ENCODE measurements at regions of chr19 and their contacts with region 1.

Region 1: DNA sequence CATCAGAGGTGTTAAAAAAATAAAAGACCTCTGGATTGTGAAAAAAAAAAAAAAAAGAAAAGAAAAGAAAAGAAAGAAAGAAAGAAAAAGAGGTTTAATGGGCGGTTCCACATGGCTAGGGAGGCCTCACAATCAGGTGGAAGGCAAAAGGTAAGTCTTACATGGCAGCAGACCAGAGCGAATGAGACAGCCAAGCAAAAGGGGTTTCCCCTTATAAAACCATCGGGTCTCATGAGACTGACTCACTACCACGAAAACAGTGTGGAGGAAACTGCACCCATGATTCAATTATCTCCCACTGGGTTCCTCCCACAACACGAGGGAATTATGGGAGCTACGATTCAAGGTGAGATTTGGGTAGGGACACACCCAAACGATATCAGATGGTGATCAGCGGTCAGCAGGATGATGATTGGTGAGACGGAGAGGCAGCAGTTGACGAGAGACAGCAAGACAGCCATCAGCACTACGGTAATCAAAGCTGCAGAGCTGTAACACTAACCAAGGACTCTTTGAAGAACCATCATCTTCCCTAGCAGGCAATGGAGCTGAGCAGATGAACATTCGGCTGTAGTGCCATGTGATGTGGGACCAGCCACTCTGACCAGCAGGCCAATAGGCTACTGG is 3.9 kb upstream of the CD209 start:
- DNase-seq: peak; percentile 47
- ATAC-seq: peak; percentile 94
- H3K4me3 Mint-ChIP-seq: peak overlapping the region; percentile 52
- H3K27ac Mint-ChIP-seq: peak overlapping the region; percentile 73
- H3K4me1 Mint-ChIP-seq: peaks cover 54% of the 10 kb centered on the region
- H3K27me3 Mint-ChIP-seq: no peaks in the 10 kb centered on the region
- CTCF ChIP-seq: no peak

Region 2: GRCh38 chr19:7104747-7105447 is 646.4 kb before region 1 on chr19:
- CTCF ChIA-PET with region 1: no interaction called
- POLR2A ChIA-PET with region 1: no interaction called
- intact Hi-C with region 1: loop called (anchors 5 kb)
- DNase-seq: no peak
- ATAC-seq: no peak
- H3K4me3 Mint-ChIP-seq: no peak overlapping the region
- H3K27ac Mint-ChIP-seq: no peak overlapping the region
- H3K4me1 Mint-ChIP-seq: peaks cover 2% of the 10 kb centered on the region
- H3K27me3 Mint-ChIP-seq: no peaks in the 10 kb centered on the region
- CTCF ChIP-seq: no peak

Region 3: DNA sequence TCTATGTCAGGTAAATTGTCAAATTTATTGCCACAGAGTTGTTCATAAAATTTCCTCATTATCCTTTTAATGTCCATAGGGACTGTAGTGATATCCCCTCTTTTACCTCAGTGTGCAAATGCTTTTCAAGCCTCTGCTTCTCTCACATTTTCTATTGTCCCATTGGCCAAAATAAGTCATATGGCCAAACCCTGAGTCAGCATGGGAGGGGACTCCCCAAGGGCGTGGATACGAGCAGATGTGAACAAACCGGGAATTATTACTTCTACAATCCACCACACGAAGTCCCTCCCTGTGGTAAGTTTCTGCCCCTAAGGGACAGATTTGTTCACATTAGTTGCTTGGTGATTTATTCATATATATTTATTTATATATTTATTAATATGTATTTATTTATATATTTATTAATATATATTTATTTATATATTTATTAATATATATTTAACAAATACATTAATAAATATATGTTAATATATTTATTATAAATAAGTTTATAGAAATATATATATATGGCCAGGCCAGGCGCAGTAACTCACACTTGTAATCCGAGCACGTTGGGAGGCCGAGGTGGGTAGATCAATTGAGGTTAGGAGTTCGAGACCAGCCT is 175.7 kb before region 1 on chr19:
- CTCF ChIA-PET with region 1: no interaction called
- POLR2A ChIA-PET with region 1: no interaction called
- intact Hi-C with region 1: no loop called
- DNase-seq: no peak
- ATAC-seq: no peak
- H3K4me3 Mint-ChIP-seq: no peak overlapping the region
- H3K27ac Mint-ChIP-seq: no peak overlapping the region
- H3K4me1 Mint-ChIP-seq: no peaks in the 10 kb centered on the region
- H3K27me3 Mint-ChIP-seq: peaks cover 5% of the 10 kb centered on the region
- CTCF ChIP-seq: no peak

Region 4: DNA sequence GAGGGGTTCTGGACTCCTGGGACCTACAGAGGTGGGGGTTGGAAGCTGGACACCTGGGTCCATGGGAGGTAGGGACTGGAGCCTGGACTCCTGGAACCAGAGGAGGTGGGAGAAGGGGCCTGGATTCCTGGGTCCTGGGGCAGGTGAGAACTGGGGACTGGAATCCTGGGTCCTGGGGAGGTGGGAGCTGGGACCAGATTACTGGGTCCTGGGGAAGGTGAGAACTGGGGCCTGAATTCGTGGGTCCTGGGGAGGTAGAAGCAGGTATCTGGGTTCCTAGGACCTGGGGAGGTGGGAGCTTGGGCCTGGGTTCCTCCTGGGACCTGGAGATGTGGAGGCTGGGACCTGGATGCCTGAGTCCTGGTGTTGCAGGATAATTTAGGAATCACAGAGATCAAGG is 12.4 kb after region 1 on chr19:
- CTCF ChIA-PET with region 1: no interaction called
- POLR2A ChIA-PET with region 1: interaction called, 4 read pairs
- intact Hi-C with region 1: loop called (anchors 2 kb)
- DNase-seq: no peak
- ATAC-seq: no peak
- H3K4me3 Mint-ChIP-seq: no peak overlapping the region
- H3K27ac Mint-ChIP-seq: peak overlapping the region; percentile 69
- H3K4me1 Mint-ChIP-seq: peaks cover 19% of the 10 kb centered on the region
- H3K27me3 Mint-ChIP-seq: peaks cover 8% of the 10 kb centered on the region
- CTCF ChIP-seq: no peak

Region 5: GRCh38 chr19:7779701-7780486 is 28.6 kb after region 1 on chr19:
- CTCF ChIA-PET with region 1: no interaction called
- POLR2A ChIA-PET with region 1: interaction called, 10 read pairs
- intact Hi-C with region 1: loop called (anchors 5 kb)
- DNase-seq: no peak
- ATAC-seq: no peak
- H3K4me3 Mint-ChIP-seq: no peak overlapping the region
- H3K27ac Mint-ChIP-seq: no peak overlapping the region
- H3K4me1 Mint-ChIP-seq: peaks cover 15% of the 10 kb centered on the region
- H3K27me3 Mint-ChIP-seq: peaks cover 19% of the 10 kb centered on the region
- CTCF ChIP-seq: no peak

Region 6: DNA sequence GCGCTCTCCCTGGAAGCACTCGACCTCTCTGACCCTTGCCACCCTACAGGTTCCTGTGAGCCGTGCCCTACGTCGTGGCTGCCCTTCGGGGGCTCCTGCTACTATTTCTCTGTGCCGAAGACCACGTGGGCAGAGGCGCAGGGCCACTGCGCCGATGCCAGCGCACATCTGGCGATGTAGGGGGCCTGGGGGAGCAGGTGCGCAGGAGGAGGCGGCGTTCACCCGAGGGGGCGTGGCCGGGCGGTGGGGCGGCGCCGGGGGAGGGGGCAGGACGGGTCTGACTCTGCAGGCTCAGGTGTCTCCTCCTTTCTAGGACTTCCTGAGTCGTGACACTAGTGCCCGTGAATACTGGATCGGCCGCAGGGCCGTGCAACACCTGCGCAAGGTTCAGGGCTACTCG is 38.2 kb after region 1 on chr19:
- CTCF ChIA-PET with region 1: no interaction called
- POLR2A ChIA-PET with region 1: no interaction called
- intact Hi-C with region 1: loop called (anchors 5 kb)
- DNase-seq: peak; percentile 32
- ATAC-seq: peak; percentile 80
- H3K4me3 Mint-ChIP-seq: peak overlapping the region; percentile 64
- H3K27ac Mint-ChIP-seq: no peak overlapping the region
- H3K4me1 Mint-ChIP-seq: peaks cover 18% of the 10 kb centered on the region
- H3K27me3 Mint-ChIP-seq: peaks cover 22% of the 10 kb centered on the region
- CTCF ChIP-seq: no peak